ENCODE measurements at regions of chrX and their contacts with region 1.

Region 1: GRCh38 chrX:96372313-96373046 is 312.2 kb upstream of the DIAPH2 start:
- DNase-seq: peak; percentile 43
- H3K4me3 ChIP-seq: no peak overlapping the region
- H3K27ac ChIP-seq: no peak overlapping the region
- H3K4me1 ChIP-seq: no peaks in the 10 kb centered on the region
- H3K27me3 ChIP-seq: no peaks in the 10 kb centered on the region
- CTCF ChIP-seq: peak; percentile 49 to 53
- POLR2A ChIP-seq: no peak

Region 2: GRCh38 chrX:96430756-96431427 is 58.4 kb after region 1 on chrX:
- CTCF ChIA-PET with region 1: interaction called, 4 read pairs
- POLR2A ChIA-PET with region 1: no interaction called
- dilution Hi-C with region 1: no loop called
- intact Hi-C with region 1: loop called (anchors 2 kb)
- DNase-seq: peak; percentile 49
- H3K4me3 ChIP-seq: no peak overlapping the region
- H3K27ac ChIP-seq: peak overlapping the region; percentile 81
- H3K4me1 ChIP-seq: peaks cover 43% of the 10 kb centered on the region
- H3K27me3 ChIP-seq: no peaks in the 10 kb centered on the region
- CTCF ChIP-seq: no peak
- POLR2A ChIP-seq: no peak

Region 3: DNA sequence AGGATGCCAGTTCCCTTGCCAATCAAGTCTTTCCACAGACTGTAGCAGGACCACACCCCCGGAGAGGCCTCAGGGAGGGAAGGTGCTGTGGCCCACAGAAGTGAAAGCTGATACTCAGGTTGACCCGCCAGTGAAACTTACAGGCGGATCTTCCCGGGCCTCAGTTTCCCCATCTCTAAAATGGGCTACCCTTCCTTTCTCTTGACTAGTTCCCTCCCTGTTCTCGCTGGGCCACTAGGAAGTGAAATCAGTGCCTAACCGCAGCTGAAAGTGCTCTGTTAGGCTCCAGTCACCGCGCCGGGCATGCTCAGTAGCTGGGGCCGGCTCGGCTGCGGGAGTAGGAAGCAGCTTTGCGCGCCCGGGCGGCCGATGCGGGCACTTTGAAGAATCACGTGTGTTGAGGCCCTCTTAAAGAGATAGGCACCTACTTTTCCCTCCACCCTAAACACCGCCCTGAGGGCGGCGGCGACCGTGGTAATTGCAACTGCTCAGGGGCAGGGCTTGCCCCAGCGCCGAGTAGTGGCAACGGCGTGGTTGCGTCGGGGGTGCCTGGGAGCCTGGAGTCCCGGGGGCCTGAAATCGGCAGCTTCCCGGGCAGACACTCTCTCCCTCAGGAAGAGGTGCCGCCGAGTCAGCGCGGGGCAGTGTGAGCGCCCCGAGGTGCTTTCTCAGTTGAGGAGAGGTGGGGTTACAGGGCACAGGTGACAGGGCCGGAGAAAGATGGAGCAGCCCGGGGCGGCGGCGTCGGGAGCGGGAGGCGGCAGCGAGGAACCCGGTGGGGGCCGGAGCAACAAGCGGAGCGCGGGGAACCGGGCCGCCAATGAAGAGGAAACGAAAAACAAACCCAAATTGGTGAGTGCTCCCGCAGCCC is 312.1 kb after region 1 on chrX and contains the start of gene DIAPH2:
- CTCF ChIA-PET with region 1: interaction called, 5 read pairs
- POLR2A ChIA-PET with region 1: no interaction called
- dilution Hi-C with region 1: no loop called
- intact Hi-C with region 1: loop called (anchors 1 kb)
- DNase-seq: peak; percentile 76
- H3K4me3 ChIP-seq: peak within 1 kb of the TSS; percentile 75 to 92 (median 76)
- H3K27ac ChIP-seq: peak within 1 kb of the TSS; percentile 68
- H3K4me1 ChIP-seq: peaks cover 11% of the 10 kb centered on the region
- H3K27me3 ChIP-seq: no peaks in the 10 kb centered on the region
- CTCF ChIP-seq: no peak
- POLR2A ChIP-seq: no peak
- total RNA-seq, gene DIAPH2: 30.0 and 30.3 TPM in 2 replicates

Region 4: GRCh38 chrX:96770315-96770714 is 397.8 kb after region 1 on chrX:
- CTCF ChIA-PET with region 1: interaction called, 16 read pairs
- POLR2A ChIA-PET with region 1: no interaction called
- dilution Hi-C with region 1: no loop called
- intact Hi-C with region 1: loop called (anchors 1 kb)
- DNase-seq: peak; percentile 9
- H3K4me3 ChIP-seq: no peak overlapping the region
- H3K27ac ChIP-seq: no peak overlapping the region
- H3K4me1 ChIP-seq: no peaks in the 10 kb centered on the region
- H3K27me3 ChIP-seq: no peaks in the 10 kb centered on the region
- CTCF ChIP-seq: peak in 1 of 2 donors; percentile 5
- POLR2A ChIP-seq: no peak

Measured in endothelial cell of umbilical vein (primary cell).